ENCODE measurements at regions of chr2 and their contacts with region 1.

Region 1: GRCh38 chr2:78734221-78734620 is 291.3 kb upstream of the REG3G start:
- ATAC-seq: no peak
- H3K4me3 ChIP-seq: no peak overlapping the region
- H3K27ac ChIP-seq: no peak overlapping the region
- H3K4me1 ChIP-seq: no peaks in the 10 kb centered on the region

Region 2: DNA sequence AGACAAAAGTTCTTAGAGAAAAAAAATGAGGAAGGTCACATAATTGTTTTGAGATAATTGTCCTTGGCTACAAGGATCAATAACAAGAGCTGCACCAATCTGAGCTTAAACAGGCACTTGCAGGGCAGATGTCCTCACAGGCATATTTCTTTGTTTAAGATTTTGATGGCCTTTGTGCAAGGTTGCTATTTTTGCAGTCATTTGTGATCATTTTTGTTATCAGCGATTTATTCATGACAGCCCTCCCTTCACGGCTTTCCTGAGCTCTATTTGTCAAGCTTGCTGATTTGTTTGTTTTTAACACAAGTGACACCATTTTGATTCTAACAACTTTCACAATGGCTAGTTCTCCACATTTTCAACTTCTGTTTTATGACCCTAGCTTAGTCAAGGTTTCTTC is 127.3 kb before region 1 on chr2:
- in situ Hi-C with region 1: no loop called
- ATAC-seq: no peak
- H3K4me3 ChIP-seq: no peak overlapping the region
- H3K27ac ChIP-seq: no peak overlapping the region
- H3K4me1 ChIP-seq: peaks cover 6 to 7% of the 10 kb centered on the region in 2 donors

Region 3: GRCh38 chr2:78839259-78839658 is 105.0 kb after region 1 on chr2:
- in situ Hi-C with region 1: loop called in 1 of 9 experiments (anchors 25 kb)
- ATAC-seq: no peak
- H3K4me3 ChIP-seq: no peak overlapping the region
- H3K27ac ChIP-seq: no peak overlapping the region
- H3K4me1 ChIP-seq: peaks cover 0 to 4% of the 10 kb centered on the region in 2 donors

Region 4: DNA sequence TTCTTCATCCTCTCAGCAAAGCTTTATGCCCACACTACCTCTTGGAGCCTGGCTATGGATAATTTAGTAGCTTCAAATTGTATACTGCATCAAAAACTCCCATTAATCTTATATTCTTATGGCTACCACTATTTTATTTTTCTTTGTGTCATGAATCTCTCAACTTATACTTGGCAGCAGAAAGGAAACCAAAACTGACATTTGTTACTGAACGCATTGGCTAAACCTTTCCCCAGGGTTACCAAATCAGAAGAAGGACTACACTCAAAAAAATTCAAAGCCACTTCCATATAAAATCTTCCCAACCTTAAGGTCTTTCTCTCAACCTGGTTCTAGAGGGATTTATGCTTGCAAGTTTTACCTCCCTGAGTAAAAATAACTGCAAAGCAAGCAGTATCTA is 194.3 kb after region 1 on chr2:
- in situ Hi-C with region 1: no loop called
- ATAC-seq: no peak
- H3K4me3 ChIP-seq: no peak overlapping the region
- H3K27ac ChIP-seq: no peak overlapping the region
- H3K4me1 ChIP-seq: no peaks in the 10 kb centered on the region

Measured in motor neuron (in vitro differentiated cells).